ENCODE measurements at regions of chr7 and their contacts with region 1.

Region 1: GRCh38 chr7:112550468-112551060 is 69.8 kb downstream of the LSMEM1 start:
- DNase-seq: no peak
- ATAC-seq: peak; percentile 78

Region 2: GRCh38 chr7:113414401-113415035 is 864.0 kb after region 1 on chr7:
- intact Hi-C with region 1: loop called (anchors 10 kb)
- DNase-seq: no peak
- ATAC-seq: no peak